Calu3 (cell line): ENCODE measurements at regions of chr1 and their contacts with region 1.

Region 1: GRCh38 chr1:91282695-91283420 is 121.8 kb downstream of the HFM1 start:
- DNase-seq: peak; percentile 66
- H3K4me3 Mint-ChIP-seq: no peak overlapping the region
- H3K27ac Mint-ChIP-seq: no peak overlapping the region
- H3K4me1 Mint-ChIP-seq: no peaks in the 10 kb centered on the region
- H3K27me3 Mint-ChIP-seq: peaks cover 27% of the 10 kb centered on the region
- CTCF ChIP-seq: peak; percentile 58

Region 2: DNA sequence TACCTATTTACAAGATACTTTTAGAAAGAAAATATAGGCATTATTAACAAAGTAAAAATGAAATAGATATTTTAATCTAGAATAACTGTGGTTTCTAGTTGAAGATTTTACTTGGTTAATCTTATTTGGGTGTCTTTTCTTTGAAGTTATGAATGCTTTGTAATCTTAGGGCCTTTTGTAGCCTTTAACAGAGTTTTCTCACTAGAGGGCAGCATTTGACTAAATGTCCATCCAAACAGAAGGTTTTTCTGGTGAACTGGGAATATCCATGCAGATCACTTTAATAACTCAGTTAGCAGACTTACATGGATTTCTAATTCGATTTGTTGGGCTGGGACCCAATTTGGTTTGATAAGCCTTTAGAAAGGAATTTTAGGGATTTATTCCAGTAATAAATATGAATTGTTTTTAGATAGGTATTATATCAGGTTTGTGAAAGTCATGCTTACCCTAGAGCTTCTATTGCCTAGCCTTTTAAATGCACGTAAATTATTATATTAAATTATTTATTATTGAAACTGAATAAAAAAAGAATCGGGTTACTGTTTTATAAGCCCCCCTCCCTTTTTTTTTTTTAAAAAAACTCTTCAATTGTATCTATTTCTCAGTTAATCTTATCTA is 1168.2 kb before region 1 on chr1:
- CTCF ChIA-PET with region 1: no interaction called
- intact Hi-C with region 1: loop called (anchors 2 kb)
- DNase-seq: peak; percentile 17
- H3K4me3 Mint-ChIP-seq: no peak overlapping the region
- H3K27ac Mint-ChIP-seq: no peak overlapping the region
- H3K4me1 Mint-ChIP-seq: no peaks in the 10 kb centered on the region
- H3K27me3 Mint-ChIP-seq: peaks cover 29% of the 10 kb centered on the region
- CTCF ChIP-seq: no peak

Region 3: GRCh38 chr1:90579212-90579802 is 703.6 kb before region 1 on chr1:
- CTCF ChIA-PET with region 1: interaction called, 3 read pairs
- intact Hi-C with region 1: loop called (anchors 2 kb)
- DNase-seq: no peak
- H3K4me3 Mint-ChIP-seq: no peak overlapping the region
- H3K27ac Mint-ChIP-seq: no peak overlapping the region
- H3K4me1 Mint-ChIP-seq: no peaks in the 10 kb centered on the region
- H3K27me3 Mint-ChIP-seq: peaks cover 30% of the 10 kb centered on the region
- CTCF ChIP-seq: peak; percentile 35

Region 4: GRCh38 chr1:91404151-91405012 is 121.5 kb after region 1 on chr1 and contains the start of gene HFM1:
- CTCF ChIA-PET with region 1: no interaction called
- intact Hi-C with region 1: loop called (anchors 1 kb)
- DNase-seq: peak; percentile 64
- H3K4me3 Mint-ChIP-seq: peak within 1 kb of the TSS; percentile 66
- H3K27ac Mint-ChIP-seq: no peak within 1 kb of the TSS
- H3K4me1 Mint-ChIP-seq: no peaks in the 10 kb centered on the region
- H3K27me3 Mint-ChIP-seq: peaks cover 51% of the 10 kb centered on the region
- CTCF ChIP-seq: no peak
- total RNA-seq, gene HFM1: not detected in 2 replicates

Region 5: DNA sequence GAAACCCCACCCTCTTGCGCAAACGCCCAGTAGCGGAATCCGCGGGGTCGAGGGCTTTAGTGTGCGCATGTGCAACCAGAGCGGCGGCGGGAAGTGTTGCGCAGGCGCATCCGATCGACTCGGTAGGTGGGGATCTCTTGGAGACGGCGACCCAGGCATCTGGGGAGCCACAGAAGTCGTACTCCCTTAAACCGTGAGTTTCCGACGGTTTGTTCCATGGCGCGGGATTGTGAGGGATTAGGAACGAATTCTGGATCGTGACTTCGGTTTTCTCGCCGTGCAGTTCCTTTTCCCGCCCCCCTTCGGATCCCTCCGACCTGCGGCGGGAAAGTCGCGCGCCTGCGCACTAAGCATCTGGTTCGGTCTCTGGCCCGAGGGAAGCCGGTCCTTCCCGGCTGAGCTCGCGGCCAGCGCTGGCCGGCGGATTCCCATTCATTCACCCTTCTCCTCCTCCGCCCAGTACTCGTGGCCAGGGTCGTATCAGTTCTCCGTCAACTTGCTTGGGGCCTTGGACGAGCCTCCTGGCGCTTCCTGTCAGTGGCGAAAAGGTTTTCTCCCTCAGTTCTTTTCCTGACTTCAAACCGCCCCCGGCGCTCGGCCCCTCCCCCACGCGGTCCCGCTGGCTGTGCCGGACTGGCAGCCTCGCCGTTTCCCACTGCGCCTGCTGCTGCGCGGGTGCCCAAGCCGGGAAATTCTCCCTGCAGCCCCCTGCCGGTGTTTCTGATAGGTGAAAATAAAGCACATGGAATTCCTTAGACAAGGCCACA is 218.1 kb after region 1 on chr1 and contains the start of gene CDC7:
- CTCF ChIA-PET with region 1: no interaction called
- intact Hi-C with region 1: loop called (anchors 5 kb)
- DNase-seq: peak; percentile 95
- H3K4me3 Mint-ChIP-seq: no peak within 1 kb of the TSS
- H3K27ac Mint-ChIP-seq: no peak within 1 kb of the TSS
- H3K4me1 Mint-ChIP-seq: peaks cover 18% of the 10 kb centered on the region
- H3K27me3 Mint-ChIP-seq: no peaks in the 10 kb centered on the region
- CTCF ChIP-seq: peak; percentile 61
- total RNA-seq, gene CDC7: 15.6 and 16.0 TPM in 2 replicates

Region 6: DNA sequence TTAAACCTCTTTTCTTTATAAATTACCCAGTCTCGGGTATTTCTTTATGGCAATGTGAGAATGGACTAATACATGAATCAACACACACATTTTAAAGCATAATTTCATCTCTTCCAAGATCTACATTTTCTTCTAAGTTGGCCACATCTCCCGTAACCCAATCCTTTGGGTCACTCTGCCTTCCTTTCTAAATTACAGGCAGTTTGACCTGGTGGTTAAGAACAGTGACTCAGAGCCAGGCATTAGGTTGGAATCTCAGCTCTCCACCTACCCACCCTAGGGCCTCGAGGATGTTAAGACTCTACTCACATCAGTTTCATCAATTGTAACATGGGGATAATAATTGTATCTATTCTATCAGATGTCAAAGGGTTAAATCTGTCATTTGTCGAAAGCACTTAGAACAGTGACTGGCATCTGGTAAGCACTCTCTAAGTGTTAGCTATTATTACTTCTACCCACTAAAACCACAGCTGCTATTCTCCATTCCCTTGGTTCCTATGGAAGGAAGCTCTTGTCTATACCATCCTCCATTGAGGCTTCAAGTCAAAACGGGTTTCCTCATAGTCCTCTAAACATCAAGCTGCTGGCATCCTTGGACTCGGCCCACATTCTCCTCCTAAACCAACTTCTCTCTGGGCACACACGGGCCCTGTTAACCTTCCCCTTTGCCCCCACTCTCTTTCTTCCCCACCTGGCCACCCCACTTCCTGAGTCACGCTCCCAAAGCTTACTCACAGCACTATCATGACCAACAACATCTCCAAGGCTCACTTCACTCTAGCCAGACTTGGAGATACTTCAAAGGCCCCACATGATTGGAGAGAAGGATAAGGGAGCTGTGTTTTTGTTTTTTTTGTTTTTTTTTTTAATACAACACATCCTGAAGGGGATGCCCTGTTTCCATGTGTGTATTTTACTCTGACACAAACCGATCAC is 486.2 kb after region 1 on chr1:
- CTCF ChIA-PET with region 1: no interaction called
- intact Hi-C with region 1: no loop called
- DNase-seq: no peak
- H3K4me3 Mint-ChIP-seq: no peak overlapping the region
- H3K27ac Mint-ChIP-seq: no peak overlapping the region
- H3K4me1 Mint-ChIP-seq: peaks cover 45% of the 10 kb centered on the region
- H3K27me3 Mint-ChIP-seq: no peaks in the 10 kb centered on the region
- CTCF ChIP-seq: no peak

Region 7: GRCh38 chr1:92291372-92291999 is 1008.6 kb after region 1 on chr1:
- CTCF ChIA-PET with region 1: no interaction called
- intact Hi-C with region 1: loop called (anchors 5 kb)
- DNase-seq: no peak
- H3K4me3 Mint-ChIP-seq: no peak overlapping the region
- H3K27ac Mint-ChIP-seq: no peak overlapping the region
- H3K4me1 Mint-ChIP-seq: no peaks in the 10 kb centered on the region
- H3K27me3 Mint-ChIP-seq: no peaks in the 10 kb centered on the region
- CTCF ChIP-seq: peak; percentile 40